Mammary epithelial cell (primary cell): ENCODE measurements at regions of chr1 and their contacts with region 1.

Region 1: GRCh38 chr1:183023601-183024316 is 539 bp downstream of the LAMC1 start:
- DNase-seq: peak; percentile 80
- H3K4me3 ChIP-seq: peak overlapping the region; percentile 77 to 96 (median 80)
- H3K27ac ChIP-seq: peak overlapping the region; percentile 87
- H3K4me1 ChIP-seq: peaks cover 50% of the 10 kb centered on the region
- H3K27me3 ChIP-seq: no peaks in the 10 kb centered on the region
- CTCF ChIP-seq: peak; percentile 53 to 82

Region 2: GRCh38 chr1:182993746-182994145 is 30.0 kb before region 1 on chr1:
- CTCF ChIA-PET with region 1: no interaction called
- dilution Hi-C with region 1: no loop called
- in situ Hi-C with region 1: no loop called
- intact Hi-C with region 1: loop called (anchors 2 kb)
- DNase-seq: peak; percentile 88
- H3K4me3 ChIP-seq: no peak overlapping the region
- H3K27ac ChIP-seq: no peak overlapping the region
- H3K4me1 ChIP-seq: peaks cover 13% of the 10 kb centered on the region
- H3K27me3 ChIP-seq: no peaks in the 10 kb centered on the region
- CTCF ChIP-seq: no peak

Region 3: DNA sequence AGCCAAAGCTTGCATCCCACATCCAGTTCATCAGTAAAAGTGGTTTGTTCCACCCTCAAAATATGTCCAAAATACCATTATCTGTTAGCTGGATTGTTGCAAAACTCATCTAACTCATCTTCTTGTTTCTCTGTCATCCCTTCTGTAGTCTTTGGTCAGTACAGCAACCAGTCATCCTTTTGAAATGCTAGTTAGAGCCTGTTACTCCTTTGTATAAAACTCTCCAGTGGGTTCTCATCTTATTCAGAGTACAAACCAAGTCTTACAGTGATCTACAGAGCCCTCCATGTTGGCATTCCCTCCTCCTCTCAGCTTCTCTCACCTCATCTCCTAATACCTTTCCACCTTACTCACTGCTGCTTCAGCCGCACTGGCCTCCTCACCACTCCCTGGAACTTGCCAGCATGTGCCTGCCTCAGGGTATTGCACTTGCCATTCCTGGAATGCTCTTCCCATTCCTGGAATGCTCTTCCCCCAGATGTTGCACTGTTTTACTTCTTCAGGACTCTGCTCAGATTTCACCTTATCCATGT is 70.1 kb after region 1 on chr1:
- CTCF ChIA-PET with region 1: interaction called, 7 read pairs
- dilution Hi-C with region 1: no loop called
- in situ Hi-C with region 1: no loop called
- intact Hi-C with region 1: loop called (anchors 1 kb)
- DNase-seq: peak; percentile 78
- H3K4me3 ChIP-seq: no peak overlapping the region
- H3K27ac ChIP-seq: peak overlapping the region; percentile 26
- H3K4me1 ChIP-seq: peaks cover 41% of the 10 kb centered on the region
- H3K27me3 ChIP-seq: no peaks in the 10 kb centered on the region
- CTCF ChIP-seq: peak in 1 of 2 donors; percentile 2

Region 4: GRCh38 chr1:183180634-183181056 is 156.9 kb after region 1 on chr1:
- CTCF ChIA-PET with region 1: no interaction called
- dilution Hi-C with region 1: no loop called
- in situ Hi-C with region 1: loop called in 1 of 2 experiments (anchors 10 kb)
- intact Hi-C with region 1: no loop called
- DNase-seq: peak; percentile 96
- H3K4me3 ChIP-seq: peak overlapping the region in 1 of 3 experiments; percentile 13
- H3K27ac ChIP-seq: peak overlapping the region; percentile 99
- H3K4me1 ChIP-seq: peaks cover 45% of the 10 kb centered on the region
- H3K27me3 ChIP-seq: no peaks in the 10 kb centered on the region
- CTCF ChIP-seq: no peak

Region 5: DNA sequence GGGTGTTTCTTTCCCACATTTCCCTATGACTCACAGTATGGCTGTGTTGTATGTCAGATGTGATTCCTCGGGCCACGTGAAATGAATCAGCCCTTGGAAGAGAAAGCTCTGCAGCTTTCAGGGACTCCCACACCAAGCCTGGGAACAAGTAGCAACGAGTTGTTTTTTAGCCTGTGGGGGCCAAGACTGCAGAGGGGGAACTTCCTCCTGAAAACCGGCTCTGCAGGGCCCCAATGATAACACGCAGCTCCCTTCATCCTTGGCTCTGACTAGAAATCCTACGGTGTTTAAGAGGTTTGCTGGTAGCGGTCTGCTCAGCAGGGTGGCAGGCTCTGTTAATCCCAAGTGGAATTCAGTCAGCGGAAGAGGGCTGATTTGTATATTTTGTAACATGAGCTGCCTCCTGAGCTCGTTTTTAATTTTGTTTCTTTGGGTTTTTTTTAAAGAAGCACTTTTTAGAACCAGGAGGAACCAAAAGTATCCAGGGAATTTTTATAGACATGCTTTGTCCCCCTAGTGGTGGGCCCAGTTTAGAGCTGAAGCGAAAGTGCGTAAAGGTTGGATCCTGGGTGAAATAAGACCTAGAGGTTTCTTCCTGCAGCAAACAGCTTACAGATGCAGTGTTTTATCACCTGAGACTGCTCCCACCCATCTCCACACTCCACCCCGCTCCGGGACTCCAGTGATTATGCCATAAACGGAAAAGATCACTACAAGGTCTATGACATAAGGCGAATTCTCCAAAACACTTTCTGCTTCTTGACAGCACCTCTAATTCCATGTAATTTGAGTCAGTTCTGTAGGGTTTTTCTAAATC is 211.1 kb after region 1 on chr1:
- CTCF ChIA-PET with region 1: no interaction called
- dilution Hi-C with region 1: no loop called
- in situ Hi-C with region 1: no loop called
- intact Hi-C with region 1: loop called (anchors 2 kb)
- DNase-seq: peak; percentile 99
- H3K4me3 ChIP-seq: no peak overlapping the region
- H3K27ac ChIP-seq: peak overlapping the region; percentile 75
- H3K4me1 ChIP-seq: peaks cover 81% of the 10 kb centered on the region
- H3K27me3 ChIP-seq: no peaks in the 10 kb centered on the region
- CTCF ChIP-seq: peak; percentile 49 to 66

Region 6: GRCh38 chr1:183471743-183472487 is 448.2 kb after region 1 on chr1:
- CTCF ChIA-PET with region 1: no interaction called
- dilution Hi-C with region 1: no loop called
- in situ Hi-C with region 1: no loop called
- intact Hi-C with region 1: loop called (anchors 5 kb)
- DNase-seq: peak; percentile 96
- H3K4me3 ChIP-seq: peak overlapping the region; percentile 88 to 99 (median 99)
- H3K27ac ChIP-seq: peak overlapping the region; percentile 96
- H3K4me1 ChIP-seq: peaks cover 25% of the 10 kb centered on the region
- H3K27me3 ChIP-seq: no peaks in the 10 kb centered on the region
- CTCF ChIP-seq: no peak